Activated B cell treated with CpG ODN at 0.5 μM for 24 hours (primary cell): ENCODE measurements at regions of chr12 and their contacts with region 1.

Region 1: DNA sequence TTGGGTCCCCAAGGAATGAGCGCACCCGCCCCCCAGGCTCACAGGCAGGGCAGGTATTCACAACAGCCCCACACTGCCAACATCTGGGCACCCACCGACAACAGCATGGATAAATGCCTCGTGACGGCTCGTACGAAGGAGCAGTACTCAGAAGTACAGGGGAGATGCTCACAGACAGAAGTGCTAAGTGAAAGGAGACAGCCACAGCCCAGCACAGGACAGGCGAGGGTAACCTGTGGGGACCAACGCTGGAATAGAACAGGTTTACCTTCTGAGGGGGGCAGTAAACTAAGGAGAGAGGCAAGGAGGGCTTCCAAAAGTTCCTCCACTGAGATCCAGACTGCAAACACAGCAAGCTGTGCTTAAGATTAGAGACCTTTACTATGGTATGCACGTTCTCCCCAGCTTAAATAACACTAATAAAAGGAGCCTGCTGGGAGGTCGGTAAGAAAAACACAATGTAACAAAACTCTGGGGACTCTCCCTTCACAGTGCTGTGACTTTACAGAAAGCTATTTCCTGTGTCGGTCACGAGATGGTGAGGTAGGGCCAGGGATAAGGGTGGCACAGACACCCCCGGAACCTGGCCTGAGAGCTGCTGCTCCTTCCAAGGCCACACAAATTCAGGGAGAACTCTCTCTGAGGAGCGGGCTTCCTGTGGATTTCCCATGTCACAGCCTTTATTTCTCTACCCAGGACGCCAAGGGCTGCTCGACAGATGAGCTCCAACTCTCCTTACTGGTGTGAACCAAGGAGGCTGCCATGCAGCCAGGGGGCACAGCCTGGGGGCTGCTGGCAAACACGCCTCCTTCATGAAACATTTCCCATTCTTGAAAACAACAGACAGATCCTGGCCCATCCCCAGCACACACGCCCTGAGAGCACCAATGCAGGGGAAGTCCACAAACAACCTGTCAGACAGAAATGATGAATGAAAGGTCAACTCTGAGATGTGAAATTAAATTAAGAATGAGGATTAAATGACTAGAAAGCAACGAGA is 26.3 kb downstream of the SLC15A4 start:
- DNase-seq: no peak
- ATAC-seq: peak; percentile 67
- H3K4me3 Mint-ChIP-seq: peak overlapping the region; percentile 77
- H3K27ac Mint-ChIP-seq: peak overlapping the region; percentile 94
- H3K4me1 Mint-ChIP-seq: peaks cover 93% of the 10 kb centered on the region
- H3K27me3 Mint-ChIP-seq: no peaks in the 10 kb centered on the region
- CTCF ChIP-seq: no peak

Region 2: GRCh38 chr12:128644664-128645296 is 152.6 kb before region 1 on chr12:
- CTCF ChIA-PET with region 1: no interaction called
- POLR2A ChIA-PET with region 1: no interaction called
- intact Hi-C with region 1: loop called (anchors 5 kb)
- DNase-seq: peak; percentile 30
- ATAC-seq: no peak
- H3K4me3 Mint-ChIP-seq: no peak overlapping the region
- H3K27ac Mint-ChIP-seq: no peak overlapping the region
- H3K4me1 Mint-ChIP-seq: no peaks in the 10 kb centered on the region
- H3K27me3 Mint-ChIP-seq: no peaks in the 10 kb centered on the region
- CTCF ChIP-seq: peak; percentile 64

Region 3: GRCh38 chr12:128810182-128811127 is 13.0 kb after region 1 on chr12:
- CTCF ChIA-PET with region 1: interaction called, 24 read pairs
- POLR2A ChIA-PET with region 1: interaction called, 86 read pairs
- intact Hi-C with region 1: loop called (anchors 1 kb)
- DNase-seq: no peak
- ATAC-seq: peak; percentile 88
- H3K4me3 Mint-ChIP-seq: peak overlapping the region; percentile 58
- H3K27ac Mint-ChIP-seq: peak overlapping the region; percentile 87
- H3K4me1 Mint-ChIP-seq: peaks cover 67% of the 10 kb centered on the region
- H3K27me3 Mint-ChIP-seq: no peaks in the 10 kb centered on the region
- CTCF ChIP-seq: no peak

Region 4: GRCh38 chr12:128823916-128824839 is 26.8 kb after region 1 on chr12 and contains the start of gene SLC15A4:
- CTCF ChIA-PET with region 1: interaction called, 18 read pairs
- POLR2A ChIA-PET with region 1: interaction called, 80 read pairs
- intact Hi-C with region 1: loop called (anchors 1 kb)
- DNase-seq: peak; percentile 93
- ATAC-seq: peak; percentile 82
- H3K4me3 Mint-ChIP-seq: peak within 1 kb of the TSS; percentile 87
- H3K27ac Mint-ChIP-seq: peak within 1 kb of the TSS; percentile 82
- H3K4me1 Mint-ChIP-seq: peaks cover 57% of the 10 kb centered on the region
- H3K27me3 Mint-ChIP-seq: no peaks in the 10 kb centered on the region
- CTCF ChIP-seq: no peak
- total RNA-seq, gene SLC15A4: 48.5 and 54.0 TPM in 2 replicates

Region 5: DNA sequence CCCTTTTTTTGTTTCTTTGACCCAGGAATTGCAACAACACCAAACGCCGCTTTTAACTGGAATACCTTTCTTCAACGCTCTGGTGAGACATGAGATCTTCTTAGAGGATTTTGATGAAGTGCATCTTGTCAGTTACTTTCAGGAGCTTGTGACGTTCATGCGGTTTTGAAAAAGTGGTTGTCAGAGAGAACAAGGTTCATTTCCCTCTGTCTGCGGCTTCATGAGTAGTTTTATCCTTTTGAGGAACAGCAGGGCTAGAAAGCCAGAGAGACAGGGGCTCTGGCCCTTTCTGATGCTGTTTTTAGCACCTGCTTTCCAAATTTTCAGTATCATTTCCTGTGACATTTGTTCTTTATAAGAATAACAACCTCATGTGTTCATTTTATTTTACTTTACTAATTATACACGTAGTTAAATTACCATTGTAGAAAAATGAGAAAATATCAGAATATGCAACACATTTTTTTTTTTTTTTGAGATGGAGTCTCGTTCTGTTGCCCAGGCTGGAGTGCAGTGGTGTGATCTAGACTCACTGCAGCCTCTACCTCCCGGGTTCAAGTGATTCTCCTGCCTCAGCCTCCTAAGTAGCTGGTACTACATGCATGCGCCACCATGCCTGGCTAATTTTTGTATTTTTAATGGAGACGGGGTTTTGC is 117.6 kb after region 1 on chr12:
- CTCF ChIA-PET with region 1: no interaction called
- POLR2A ChIA-PET with region 1: no interaction called
- intact Hi-C with region 1: loop called (anchors 1 kb)
- DNase-seq: no peak
- ATAC-seq: peak; percentile 75
- H3K4me3 Mint-ChIP-seq: no peak overlapping the region
- H3K27ac Mint-ChIP-seq: no peak overlapping the region
- H3K4me1 Mint-ChIP-seq: peaks cover 7% of the 10 kb centered on the region
- H3K27me3 Mint-ChIP-seq: peaks cover 2% of the 10 kb centered on the region
- CTCF ChIP-seq: no peak